Activated CD4-positive, alpha-beta memory T cell treated with anti-CD3 and anti-CD28 coated beads, Interleukin-2, amount 10 ng/mL, durations not matched to agents 7 days and 5 days (primary cell): ENCODE measurements at regions of chr16 and their contacts with region 1.

Region 1: DNA sequence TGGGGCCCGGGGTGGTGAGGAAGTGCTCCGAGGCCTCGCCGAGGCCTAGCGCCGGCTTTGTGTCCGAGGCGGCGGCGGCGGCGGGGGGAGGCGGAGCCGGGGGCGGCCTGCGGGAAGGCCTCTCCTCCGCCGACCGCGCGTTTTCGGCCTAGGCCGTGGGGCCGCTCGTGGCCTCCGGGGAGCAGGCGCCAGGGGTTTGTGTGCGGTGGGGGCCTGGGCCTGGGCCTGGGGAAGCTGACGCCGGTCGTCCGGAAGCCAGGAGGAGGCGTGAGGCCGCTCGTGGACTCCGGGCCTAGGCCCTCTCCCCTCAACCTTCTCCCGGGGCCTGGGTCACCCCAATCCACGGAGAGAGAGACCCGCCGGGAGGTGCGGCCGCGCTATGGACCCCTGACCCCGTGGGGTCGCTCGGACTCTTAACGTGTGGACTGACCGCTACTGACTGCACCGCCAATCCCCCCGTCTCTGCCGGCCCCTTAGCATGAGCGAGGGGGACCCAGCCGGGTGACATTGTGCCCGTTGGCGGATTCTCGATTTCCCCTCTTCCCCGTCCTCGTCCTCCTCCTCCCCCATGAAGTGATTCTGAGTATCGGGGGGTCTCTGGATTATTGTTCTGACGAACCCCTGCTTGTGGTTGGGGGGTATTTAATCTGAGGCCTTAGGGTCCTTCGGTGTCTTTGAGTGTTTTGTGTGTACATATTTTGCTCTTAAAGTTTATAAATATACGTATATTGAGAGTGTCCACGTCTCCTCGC is 660 bp downstream of the RBBP6 start:
- DNase-seq: peak; percentile 65
- H3K4me3 Mint-ChIP-seq: peak overlapping the region; percentile 100
- H3K27ac Mint-ChIP-seq: peak overlapping the region; percentile 100
- H3K4me1 Mint-ChIP-seq: peaks cover 38% of the 10 kb centered on the region
- H3K27me3 Mint-ChIP-seq: no peaks in the 10 kb centered on the region

Region 2: DNA sequence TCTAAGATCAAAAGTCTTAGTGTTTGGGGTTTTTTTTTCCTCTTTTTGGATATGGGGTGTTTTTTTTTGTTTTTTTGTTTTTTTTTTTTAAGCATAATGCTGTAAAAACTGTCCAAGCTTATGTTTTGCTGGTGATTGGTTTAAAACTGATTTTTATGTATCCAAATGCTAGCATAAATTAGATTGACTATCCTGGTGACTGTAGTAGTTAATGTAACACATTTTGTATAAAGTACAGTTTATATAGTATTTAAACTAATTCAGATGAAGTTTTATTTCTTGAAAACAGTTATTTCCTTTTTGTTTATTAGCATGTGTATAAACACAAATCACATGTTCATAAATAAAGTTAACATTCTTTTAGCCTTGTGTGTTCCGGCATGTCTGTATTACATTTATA is 10.3 kb after region 1 on chr16:
- CTCF ChIA-PET with region 1: interaction called, 4 read pairs
- POLR2A ChIA-PET with region 1: interaction called, 10 read pairs
- DNase-seq: no peak
- H3K4me3 Mint-ChIP-seq: no peak overlapping the region
- H3K27ac Mint-ChIP-seq: no peak overlapping the region
- H3K4me1 Mint-ChIP-seq: peaks cover 38% of the 10 kb centered on the region
- H3K27me3 Mint-ChIP-seq: no peaks in the 10 kb centered on the region

Region 3: GRCh38 chr16:24568392-24568791 is 28.4 kb after region 1 on chr16:
- CTCF ChIA-PET with region 1: no interaction called
- POLR2A ChIA-PET with region 1: interaction called, 12 read pairs
- DNase-seq: no peak
- H3K4me3 Mint-ChIP-seq: no peak overlapping the region
- H3K27ac Mint-ChIP-seq: no peak overlapping the region
- H3K4me1 Mint-ChIP-seq: no peaks in the 10 kb centered on the region
- H3K27me3 Mint-ChIP-seq: no peaks in the 10 kb centered on the region